Posterior cingulate gyrus (tissue), 11 donors: ENCODE measurements at regions of chr5 and their contacts with region 1.

Region 1: GRCh38 chr5:176388444-176389134 is at the starts of genes HIGD2A and NOP16:
- DNase-seq: peak; percentile 96 to 99 (median 98)

Region 2: DNA sequence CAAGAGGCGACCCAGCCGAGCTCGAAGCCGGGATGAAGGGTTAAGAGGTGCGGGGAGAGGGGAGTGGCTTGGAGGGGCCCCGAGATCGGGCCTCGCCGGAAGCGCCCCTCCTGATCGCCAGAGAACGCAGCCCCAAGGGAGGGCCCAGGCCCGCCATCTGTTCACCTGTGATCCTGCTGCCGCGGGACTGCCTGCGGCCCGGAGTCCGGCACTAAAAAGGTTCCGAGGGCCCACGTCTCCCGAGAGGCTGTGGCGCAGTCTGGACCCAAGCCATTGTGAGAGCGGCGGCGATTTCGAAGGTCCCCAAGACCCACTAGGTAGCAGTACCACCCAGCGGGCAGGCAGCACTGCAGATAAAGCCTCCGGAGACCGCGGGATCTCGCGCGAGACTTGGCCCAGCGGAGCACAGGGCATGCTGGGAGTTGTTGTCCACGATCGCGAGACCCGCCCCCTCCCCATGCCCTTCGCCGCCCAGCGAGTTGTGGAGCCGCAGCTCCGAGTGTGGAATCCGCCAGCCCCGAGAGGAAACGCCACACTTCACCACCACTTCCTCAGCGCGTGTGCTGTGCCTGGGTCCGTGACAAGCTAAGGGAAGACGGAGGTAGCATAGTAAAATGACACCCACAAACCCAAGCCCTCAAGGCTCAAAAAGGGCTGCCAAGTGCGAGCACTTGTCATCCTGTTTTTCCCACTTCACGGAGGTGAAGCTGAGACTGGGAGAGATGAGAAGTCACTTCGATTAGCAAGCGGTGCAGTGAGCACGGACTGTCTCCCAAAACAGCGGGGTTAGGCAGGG is 27.0 kb before region 1 on chr5 and contains the start of gene KIAA1191:
- intact Hi-C with region 1: loop called (anchors 1 kb)
- DNase-seq: peak; percentile 91 to 99 (median 96)

Region 3: GRCh38 chr5:176447982-176448608 is 59.5 kb after region 1 on chr5 and contains the start of gene FAF2:
- intact Hi-C with region 1: loop called (anchors 2 kb)
- DNase-seq: peak; percentile 93 to 99 (median 95)

Region 4: DNA sequence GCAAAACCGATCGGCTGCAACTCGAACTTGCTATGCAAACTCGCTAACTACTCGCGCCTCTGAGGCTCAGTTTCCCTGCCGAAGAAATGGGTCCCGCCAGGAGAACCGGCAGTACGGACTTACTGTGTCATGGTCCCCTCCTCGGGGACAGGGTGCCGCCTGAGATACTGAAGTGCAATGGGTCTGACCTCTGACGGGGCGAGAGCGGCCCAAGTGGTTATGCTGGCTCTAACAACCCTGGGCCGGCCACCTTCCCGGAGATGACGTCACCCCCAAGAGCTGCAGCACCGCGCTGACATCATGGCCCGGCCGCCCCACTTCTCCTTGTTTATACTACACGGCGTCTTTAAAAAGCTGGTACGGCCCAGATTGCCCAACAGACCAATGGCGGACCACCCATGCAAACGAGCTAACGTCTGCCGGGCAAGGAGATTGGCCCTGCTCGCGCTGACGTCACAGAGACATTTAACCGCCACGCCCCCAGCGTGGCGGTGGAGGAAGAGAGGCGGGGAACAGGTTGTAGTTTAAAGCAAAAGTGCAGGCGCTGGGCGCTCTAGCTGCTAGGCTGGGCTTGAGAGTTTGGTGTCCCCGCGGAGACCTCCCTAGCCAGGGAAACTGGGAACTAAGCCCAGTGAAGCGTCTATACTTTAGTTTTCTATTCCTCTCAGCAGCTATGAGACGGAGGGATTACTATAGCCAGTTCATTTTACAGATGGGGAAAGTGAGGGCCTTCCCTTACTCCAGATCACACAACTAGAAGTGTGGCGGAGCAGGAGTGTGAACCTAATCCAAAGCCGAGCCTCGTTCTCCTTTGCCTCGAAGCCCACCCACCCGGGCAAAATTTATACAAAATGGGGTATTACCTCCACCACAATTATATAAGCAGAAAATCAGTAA is 149.3 kb after region 1 on chr5:
- intact Hi-C with region 1: loop called (anchors 10 kb)
- DNase-seq: peak; percentile 97 to 100 (median 99)